Calu3 (cell line): ENCODE measurements at regions of chr1 and their contacts with region 1.

Region 1: DNA sequence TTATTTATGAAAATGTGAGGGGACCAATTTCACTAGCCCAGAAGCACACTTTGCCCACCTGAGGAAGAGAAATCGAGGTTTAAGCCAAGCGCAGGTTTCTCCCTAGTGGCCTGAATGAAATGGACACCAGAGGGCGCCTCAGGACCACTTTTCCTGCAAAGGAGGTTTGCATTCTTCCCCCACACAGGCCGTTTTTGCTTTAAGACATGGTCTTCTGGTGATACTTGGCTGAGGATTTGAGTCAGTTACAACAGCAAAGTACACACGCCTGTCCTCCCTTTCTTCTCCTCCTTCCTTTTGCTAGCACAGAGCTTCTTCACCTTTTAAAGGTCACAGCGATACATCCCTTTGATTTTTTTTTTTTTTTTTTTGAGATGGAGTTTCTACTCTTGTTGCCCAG is 5.4 kb downstream of the PLA2G2E start:
- DNase-seq: peak; percentile 77
- H3K4me3 Mint-ChIP-seq: no peak overlapping the region
- H3K27ac Mint-ChIP-seq: no peak overlapping the region
- H3K4me1 Mint-ChIP-seq: peaks cover 18% of the 10 kb centered on the region
- H3K27me3 Mint-ChIP-seq: no peaks in the 10 kb centered on the region
- CTCF ChIP-seq: peak; percentile 79

Region 2: DNA sequence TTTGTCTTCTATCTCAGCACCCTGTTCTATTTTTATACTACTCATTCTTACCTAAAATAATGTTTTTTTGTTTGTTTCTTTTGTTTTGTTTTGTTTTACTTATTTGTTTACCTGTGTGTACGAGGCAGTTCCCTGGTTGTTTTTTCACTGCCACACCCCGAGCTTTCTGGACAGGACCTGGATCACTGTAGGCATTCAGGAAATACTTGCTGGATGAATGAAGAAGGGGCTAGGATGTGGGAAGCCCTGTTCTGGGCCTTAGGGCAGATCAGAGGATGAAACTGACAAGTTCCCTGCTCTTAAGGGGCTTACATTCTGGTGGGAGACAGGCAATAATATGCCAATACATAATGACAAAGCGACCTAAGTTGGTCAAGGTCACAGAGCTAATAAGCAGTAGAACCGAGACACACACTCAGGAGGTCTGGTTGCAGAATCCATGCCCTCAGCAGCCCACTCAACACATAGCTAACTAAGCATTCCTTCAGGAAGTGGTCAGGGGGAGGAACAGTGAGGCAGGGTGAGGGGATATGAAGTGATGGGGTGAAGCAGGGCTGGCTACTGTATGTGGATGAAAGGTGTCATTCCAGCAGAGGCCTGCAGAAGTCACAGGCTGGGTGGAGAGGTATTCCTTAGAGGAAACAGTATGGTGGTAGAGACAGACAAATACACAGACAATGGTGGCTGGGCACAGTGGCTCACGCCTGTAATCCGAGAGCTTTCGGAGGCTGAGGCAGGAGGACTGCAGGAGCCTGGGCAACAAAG is 132.6 kb before region 1 on chr1:
- CTCF ChIA-PET with region 1: no interaction called
- intact Hi-C with region 1: no loop called
- DNase-seq: no peak
- H3K4me3 Mint-ChIP-seq: no peak overlapping the region
- H3K27ac Mint-ChIP-seq: peak overlapping the region; percentile 7
- H3K4me1 Mint-ChIP-seq: peaks cover 30% of the 10 kb centered on the region
- H3K27me3 Mint-ChIP-seq: no peaks in the 10 kb centered on the region
- CTCF ChIP-seq: no peak

Region 3: GRCh38 chr1:20151906-20152598 is 234.0 kb after region 1 on chr1:
- CTCF ChIA-PET with region 1: interaction called, 8 read pairs
- intact Hi-C with region 1: loop called (anchors 5 kb)
- DNase-seq: peak; percentile 84
- H3K4me3 Mint-ChIP-seq: peak overlapping the region; percentile 64
- H3K27ac Mint-ChIP-seq: peak overlapping the region; percentile 90
- H3K4me1 Mint-ChIP-seq: peaks cover 15% of the 10 kb centered on the region
- H3K27me3 Mint-ChIP-seq: no peaks in the 10 kb centered on the region
- CTCF ChIP-seq: peak; percentile 84